Naive thymus-derived CD4-positive, alpha-beta T cell (primary cell): ENCODE measurements at regions of chr6 and their contacts with region 1.

Region 1: DNA sequence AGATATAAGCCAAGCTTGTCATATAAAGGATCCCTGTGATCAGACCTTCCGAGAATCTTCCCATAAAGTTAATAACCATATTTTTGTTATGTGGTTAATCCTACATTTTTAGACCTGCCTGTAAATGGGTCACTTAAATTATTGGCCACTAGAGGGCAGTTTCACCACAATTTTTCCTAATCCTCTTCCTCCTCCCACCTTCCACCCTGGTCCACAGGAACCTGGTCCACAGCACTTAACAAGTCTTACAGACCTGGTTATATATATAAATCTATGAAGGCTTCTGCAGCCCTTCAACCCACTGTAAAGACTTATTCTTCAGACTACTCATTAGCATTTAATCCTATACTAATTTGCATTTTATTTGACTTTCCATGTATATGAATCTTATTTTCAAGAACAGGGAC is 28.3 kb downstream of the MRS2 start:
- DNase-seq: peak in 7 of 9 donors; percentile 4 to 41 (median 28)
- ATAC-seq: peak; percentile 46
- H3K4me3 ChIP-seq: no peak overlapping the region
- H3K4me3 Mint-ChIP-seq: no peak overlapping the region
- H3K27ac ChIP-seq: no peak overlapping the region
- H3K27ac Mint-ChIP-seq: no peak overlapping the region
- H3K4me1 ChIP-seq: no peaks in the 10 kb centered on the region
- H3K4me1 Mint-ChIP-seq: no peaks in the 10 kb centered on the region
- H3K27me3 ChIP-seq: no peaks in the 10 kb centered on the region
- H3K27me3 Mint-ChIP-seq: no peaks in the 10 kb centered on the region

Region 2: DNA sequence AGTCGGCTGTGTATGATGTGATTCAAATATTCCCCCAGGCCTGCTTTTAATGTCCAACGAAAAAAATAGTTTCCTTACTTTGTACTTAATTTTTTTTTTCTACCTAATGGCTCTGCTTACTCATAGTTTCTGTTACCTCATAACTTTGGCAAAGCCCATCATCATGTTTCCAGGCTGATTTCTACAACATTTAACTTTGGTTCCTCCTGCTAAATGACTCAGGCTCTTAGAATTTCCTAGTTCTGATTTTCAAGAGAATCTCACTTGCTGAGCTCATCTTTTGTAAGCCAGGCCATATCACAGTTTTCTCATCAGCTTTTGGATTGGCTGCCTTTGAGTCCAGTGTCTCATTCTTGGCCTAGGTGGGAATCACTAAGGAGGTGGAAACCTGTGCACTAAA is 1538.6 kb before region 1 on chr6:
- CTCF ChIA-PET with region 1: no interaction called
- POLR2A ChIA-PET with region 1: no interaction called
- intact Hi-C with region 1: no loop called
- DNase-seq: no peak
- ATAC-seq: no peak
- H3K4me3 ChIP-seq: no peak overlapping the region
- H3K4me3 Mint-ChIP-seq: no peak overlapping the region
- H3K27ac ChIP-seq: no peak overlapping the region
- H3K27ac Mint-ChIP-seq: no peak overlapping the region
- H3K4me1 ChIP-seq: no peaks in the 10 kb centered on the region
- H3K4me1 Mint-ChIP-seq: no peaks in the 10 kb centered on the region
- H3K27me3 ChIP-seq: no peaks in the 10 kb centered on the region
- H3K27me3 Mint-ChIP-seq: no peaks in the 10 kb centered on the region

Region 3: GRCh38 chr6:24494821-24495795 is 64.1 kb after region 1 on chr6 and contains the start of gene ALDH5A1:
- CTCF ChIA-PET with region 1: interaction called, 3 read pairs
- POLR2A ChIA-PET with region 1: no interaction called
- intact Hi-C with region 1: loop called in 1 of 2 experiments (anchors 1 kb)
- DNase-seq: peak; percentile 63 to 86 (median 84)
- ATAC-seq: peak; percentile 89
- H3K4me3 ChIP-seq: peak within 1 kb of the TSS; percentile 74
- H3K4me3 Mint-ChIP-seq: peak within 1 kb of the TSS; percentile 84 to 91 (median 88)
- H3K27ac ChIP-seq: peak within 1 kb of the TSS; percentile 63
- H3K27ac Mint-ChIP-seq: peak within 1 kb of the TSS; percentile 30 to 88 (median 74)
- H3K4me1 ChIP-seq: peaks cover 12 to 15% of the 10 kb centered on the region in 2 donors
- H3K4me1 Mint-ChIP-seq: peaks cover 13 to 50% (median 31%) of the 10 kb centered on the region in 7 donors
- H3K27me3 ChIP-seq: no peaks in the 10 kb centered on the region
- H3K27me3 Mint-ChIP-seq: peaks cover 0 to 2% (median 0%) of the 10 kb centered on the region in 5 donors
- total RNA-seq, gene ALDH5A1: 5.7 to 20.6 (median 8.9) TPM

Region 4: GRCh38 chr6:24520929-24521546 is 90.0 kb after region 1 on chr6:
- CTCF ChIA-PET with region 1: interaction called, 3 read pairs
- POLR2A ChIA-PET with region 1: no interaction called
- intact Hi-C with region 1: loop called (anchors 1 kb)
- DNase-seq: peak in 3 of 9 donors; percentile 10 to 26 (median 11)
- ATAC-seq: peak; percentile 75
- H3K4me3 ChIP-seq: no peak overlapping the region
- H3K4me3 Mint-ChIP-seq: no peak overlapping the region
- H3K27ac ChIP-seq: no peak overlapping the region
- H3K27ac Mint-ChIP-seq: peak overlapping the region in 1 of 9 donors; percentile 5
- H3K4me1 ChIP-seq: no peaks in the 10 kb centered on the region
- H3K4me1 Mint-ChIP-seq: peaks cover 0 to 20% (median 4%) of the 10 kb centered on the region in 7 donors
- H3K27me3 ChIP-seq: no peaks in the 10 kb centered on the region
- H3K27me3 Mint-ChIP-seq: no peaks in the 10 kb centered on the region

Region 5: GRCh38 chr6:24766680-24767462 is 335.8 kb after region 1 on chr6:
- CTCF ChIA-PET with region 1: no interaction called
- POLR2A ChIA-PET with region 1: no interaction called
- intact Hi-C with region 1: loop called in 1 of 2 experiments (anchors 1 kb)
- DNase-seq: peak in 6 of 9 donors; percentile 9 to 48 (median 41)
- ATAC-seq: peak; percentile 74
- H3K4me3 ChIP-seq: no peak overlapping the region
- H3K4me3 Mint-ChIP-seq: no peak overlapping the region
- H3K27ac ChIP-seq: no peak overlapping the region
- H3K27ac Mint-ChIP-seq: no peak overlapping the region
- H3K4me1 ChIP-seq: no peaks in the 10 kb centered on the region
- H3K4me1 Mint-ChIP-seq: peaks cover 0 to 8% (median 3%) of the 10 kb centered on the region in 7 donors
- H3K27me3 ChIP-seq: no peaks in the 10 kb centered on the region
- H3K27me3 Mint-ChIP-seq: no peaks in the 10 kb centered on the region

Region 6: GRCh38 chr6:25070547-25071366 is 639.7 kb after region 1 on chr6:
- CTCF ChIA-PET with region 1: no interaction called
- POLR2A ChIA-PET with region 1: no interaction called
- intact Hi-C with region 1: loop called in 1 of 2 experiments (anchors 10 kb)
- DNase-seq: peak; percentile 54 to 85 (median 79)
- ATAC-seq: peak; percentile 99
- H3K4me3 ChIP-seq: no peak overlapping the region
- H3K4me3 Mint-ChIP-seq: peak overlapping the region in 8 of 10 donors; percentile 10 to 70 (median 50)
- H3K27ac ChIP-seq: no peak overlapping the region
- H3K27ac Mint-ChIP-seq: peak overlapping the region; percentile 43 to 92 (median 83)
- H3K4me1 ChIP-seq: peaks cover 0 to 3% of the 10 kb centered on the region in 2 donors
- H3K4me1 Mint-ChIP-seq: peaks cover 5 to 15% (median 9%) of the 10 kb centered on the region in 7 donors
- H3K27me3 ChIP-seq: no peaks in the 10 kb centered on the region
- H3K27me3 Mint-ChIP-seq: peaks cover 0 to 7% (median 0%) of the 10 kb centered on the region in 5 donors

Region 7: GRCh38 chr6:25085756-25086155 is 654.7 kb after region 1 on chr6:
- CTCF ChIA-PET with region 1: interaction called, 3 read pairs
- POLR2A ChIA-PET with region 1: no interaction called
- intact Hi-C with region 1: loop called in 1 of 2 experiments (anchors 10 kb)
- DNase-seq: peak in 5 of 9 donors; percentile 13 to 26 (median 19)
- ATAC-seq: peak; percentile 62
- H3K4me3 ChIP-seq: no peak overlapping the region
- H3K4me3 Mint-ChIP-seq: peak overlapping the region in 7 of 10 donors; percentile 6 to 78 (median 54)
- H3K27ac ChIP-seq: no peak overlapping the region
- H3K27ac Mint-ChIP-seq: peak overlapping the region in 6 of 9 donors; percentile 3 to 70 (median 29)
- H3K4me1 ChIP-seq: peaks cover 18 to 22% of the 10 kb centered on the region in 2 donors
- H3K4me1 Mint-ChIP-seq: peaks cover 9 to 24% (median 15%) of the 10 kb centered on the region in 7 donors
- H3K27me3 ChIP-seq: no peaks in the 10 kb centered on the region
- H3K27me3 Mint-ChIP-seq: no peaks in the 10 kb centered on the region